Natural killer cell (primary cell): ENCODE measurements at regions of chr5 and their contacts with region 1.

Region 1: GRCh38 chr5:172714491-172715421 is 56.2 kb downstream of the DUSP1 start:
- DNase-seq: peak; percentile 58 to 84
- ATAC-seq: peak; percentile 74 to 83 (median 75)
- H3K4me3 ChIP-seq: no peak overlapping the region
- H3K4me3 Mint-ChIP-seq: no peak overlapping the region
- H3K27ac ChIP-seq: no peak overlapping the region
- H3K27ac Mint-ChIP-seq: peak overlapping the region in 1 of 2 donors; percentile 57
- H3K4me1 ChIP-seq: peaks cover 23% of the 10 kb centered on the region
- H3K4me1 Mint-ChIP-seq: peaks cover 15 to 21% of the 10 kb centered on the region in 2 donors
- H3K27me3 ChIP-seq: peaks cover 5% of the 10 kb centered on the region
- H3K27me3 Mint-ChIP-seq: peaks cover 18 to 30% of the 10 kb centered on the region in 2 donors
- CTCF ChIP-seq: peak; percentile 81

Region 2: DNA sequence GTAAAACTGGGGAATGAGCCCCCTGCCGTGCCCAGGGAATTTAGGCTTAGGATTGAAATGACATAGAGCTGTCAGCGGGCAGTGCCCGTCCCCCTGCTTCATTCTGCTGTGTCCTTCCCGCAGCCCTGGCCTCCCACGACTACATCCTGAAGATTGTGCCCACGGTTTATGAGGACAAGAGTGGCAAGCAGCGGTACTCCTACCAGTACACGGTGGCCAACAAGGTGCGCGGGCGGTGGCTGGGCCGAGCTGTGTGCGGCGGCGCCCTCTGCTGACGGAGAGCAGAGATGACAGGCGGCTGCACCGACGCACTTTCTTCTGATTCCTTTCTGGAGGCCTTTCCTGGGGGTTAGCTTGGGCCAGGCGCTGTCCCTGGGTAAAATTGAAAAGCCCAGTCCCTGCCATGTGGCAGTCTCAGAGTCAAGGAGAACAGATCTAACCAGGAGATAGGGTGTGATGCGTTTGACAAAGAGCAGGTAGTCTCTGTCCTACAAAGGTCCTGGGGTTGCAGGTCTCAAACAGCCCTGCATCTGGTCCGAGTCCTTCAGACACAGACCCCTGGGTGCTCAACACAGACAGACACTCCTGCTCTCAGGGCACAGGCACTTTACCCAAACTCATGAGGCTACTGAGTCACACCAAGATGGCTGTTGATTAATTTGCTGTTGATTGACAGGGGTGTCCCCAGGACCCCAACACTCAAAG is 217.7 kb after region 1 on chr5:
- intact Hi-C with region 1: loop called (anchors 1 kb)
- DNase-seq: peak; percentile 72 to 86
- ATAC-seq: peak; percentile 93 to 100 (median 99)
- H3K4me3 ChIP-seq: no peak overlapping the region
- H3K4me3 Mint-ChIP-seq: no peak overlapping the region
- H3K27ac ChIP-seq: no peak overlapping the region
- H3K27ac Mint-ChIP-seq: peak overlapping the region; percentile 51 to 79
- H3K4me1 ChIP-seq: peaks cover 6% of the 10 kb centered on the region
- H3K4me1 Mint-ChIP-seq: peaks cover 7 to 8% of the 10 kb centered on the region in 2 donors
- H3K27me3 ChIP-seq: no peaks in the 10 kb centered on the region
- H3K27me3 Mint-ChIP-seq: no peaks in the 10 kb centered on the region
- CTCF ChIP-seq: peak; percentile 94

Region 3: GRCh38 chr5:173204185-173204979 is 489.6 kb after region 1 on chr5:
- intact Hi-C with region 1: loop called (anchors 5 kb)
- DNase-seq: peak in 1 of 2 donors; percentile 63
- ATAC-seq: peak in 1 of 3 donors; percentile 40
- H3K4me3 ChIP-seq: no peak overlapping the region
- H3K4me3 Mint-ChIP-seq: no peak overlapping the region
- H3K27ac ChIP-seq: no peak overlapping the region
- H3K27ac Mint-ChIP-seq: no peak overlapping the region
- H3K4me1 ChIP-seq: no peaks in the 10 kb centered on the region
- H3K4me1 Mint-ChIP-seq: no peaks in the 10 kb centered on the region
- H3K27me3 ChIP-seq: peaks cover 3% of the 10 kb centered on the region
- H3K27me3 Mint-ChIP-seq: peaks cover 35 to 63% of the 10 kb centered on the region in 2 donors
- CTCF ChIP-seq: peak; percentile 50